Gastrocnemius medialis (tissue), 4 donors: ENCODE measurements at regions of chr5 and their contacts with region 1.

Region 1: GRCh38 chr5:55680353-55680752 is 31.8 kb downstream of the SLC38A9 start:
- DNase-seq: no peak
- ATAC-seq: peak; percentile 68 to 76
- H3K4me3 ChIP-seq: peak overlapping the region in 1 of 4 donors; percentile 16
- H3K27ac ChIP-seq: peak overlapping the region in 3 of 4 donors; percentile 35 to 61 (median 53)
- H3K4me1 ChIP-seq: peaks cover 14 to 22% of the 10 kb centered on the region in 2 donors
- H3K27me3 ChIP-seq: no peaks in the 10 kb centered on the region
- CTCF ChIP-seq: no peak
- POLR2A ChIP-seq: no peak

Region 2: GRCh38 chr5:55407059-55407684 is 273.2 kb before region 1 on chr5:
- in situ Hi-C with region 1: loop called in 2 of 4 experiments (anchors 5 to 10 kb)
- intact Hi-C with region 1: no loop called
- DNase-seq: no peak
- ATAC-seq: peak; percentile 62
- H3K4me3 ChIP-seq: no peak overlapping the region
- H3K27ac ChIP-seq: no peak overlapping the region
- H3K4me1 ChIP-seq: no peaks in the 10 kb centered on the region
- H3K27me3 ChIP-seq: no peaks in the 10 kb centered on the region
- CTCF ChIP-seq: peak in 4 of 5 experiments; percentile 39 to 80 (median 62)
- POLR2A ChIP-seq: no peak

Region 3: DNA sequence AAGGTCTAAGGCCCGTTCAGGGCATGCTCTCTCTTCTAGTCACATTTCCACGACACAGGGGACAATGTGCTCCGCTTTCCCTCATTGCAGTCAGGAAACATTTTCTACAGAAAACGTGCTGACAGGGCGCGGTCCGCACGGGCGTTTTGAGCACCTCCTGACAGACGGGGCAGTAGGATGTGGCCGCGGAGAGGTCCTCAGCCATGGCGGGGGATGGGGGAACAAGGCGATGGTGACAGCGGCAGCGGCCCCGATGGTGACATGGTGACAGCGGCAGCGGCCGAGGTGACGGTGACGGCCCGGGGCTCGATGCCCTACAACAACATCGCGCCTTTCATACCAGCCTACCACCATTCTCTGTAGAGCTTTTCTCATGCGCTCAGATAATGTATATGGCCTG is 149.7 kb before region 1 on chr5:
- in situ Hi-C with region 1: no loop called
- intact Hi-C with region 1: no loop called
- DNase-seq: no peak
- ATAC-seq: no peak
- H3K4me3 ChIP-seq: no peak overlapping the region
- H3K27ac ChIP-seq: peak overlapping the region in 1 of 4 donors; percentile 5
- H3K4me1 ChIP-seq: peaks cover 31 to 37% of the 10 kb centered on the region in 2 donors
- H3K27me3 ChIP-seq: no peaks in the 10 kb centered on the region
- CTCF ChIP-seq: no peak
- POLR2A ChIP-seq: no peak